IMR-90 (cell line): ENCODE measurements at regions of chr3 and their contacts with region 1.

Region 1: GRCh38 chr3:33331414-33331813 is 54.2 kb downstream of the FBXL2 start:
- DNase-seq: peak; percentile 46
- ATAC-seq: 0 out of 2 replicates have a peak, but pooled peaks have one; percentile 14
- H3K4me3 ChIP-seq: no peak overlapping the region
- H3K27ac ChIP-seq: no peak overlapping the region
- H3K4me1 ChIP-seq: peaks cover 2% of the 10 kb centered on the region; the same call in 1 of the 2 replicates
- H3K27me3 ChIP-seq: no peaks in the 10 kb centered on the region
- CTCF ChIP-seq: no peak
- POLR2A ChIP-seq: no peak
- RAD21 ChIP-seq: no peak

Region 2: DNA sequence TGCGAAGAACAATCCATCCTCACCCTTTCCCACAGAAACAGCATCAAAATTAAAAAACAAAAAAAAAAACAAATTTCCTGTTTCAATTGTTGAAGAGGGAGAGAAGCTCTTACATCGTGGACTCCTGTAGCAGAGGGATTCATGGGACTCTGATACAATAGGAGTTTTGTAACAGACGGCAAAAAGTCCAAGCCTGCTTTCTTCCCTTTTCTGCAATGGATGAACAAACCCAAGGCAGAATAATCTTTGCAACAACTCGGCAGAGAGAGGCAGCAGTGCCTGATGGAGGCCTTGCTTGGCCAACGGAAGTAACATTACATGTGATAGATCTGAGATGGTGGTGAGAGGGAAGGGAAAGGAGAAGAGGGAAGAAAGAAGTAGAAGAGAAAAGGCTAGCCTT is 353.1 kb before region 1 on chr3:
- CTCF ChIA-PET with region 1: no interaction called
- POLR2A ChIA-PET with region 1: no interaction called
- dilution Hi-C with region 1: no loop called
- in situ Hi-C with region 1: no loop called
- intact Hi-C with region 1: no loop called
- DNase-seq: no peak
- ATAC-seq: no peak
- H3K4me3 ChIP-seq: no peak overlapping the region
- H3K27ac ChIP-seq: no peak overlapping the region
- H3K4me1 ChIP-seq: no peaks in the 10 kb centered on the region
- H3K27me3 ChIP-seq: peaks cover 8% of the 10 kb centered on the region
- CTCF ChIP-seq: no peak
- POLR2A ChIP-seq: no peak
- RAD21 ChIP-seq: no peak

Region 3: GRCh38 chr3:33287672-33288282 is 43.6 kb before region 1 on chr3:
- CTCF ChIA-PET with region 1: no interaction called
- POLR2A ChIA-PET with region 1: no interaction called
- dilution Hi-C with region 1: no loop called
- in situ Hi-C with region 1: no loop called
- intact Hi-C with region 1: loop called (anchors 10 kb)
- DNase-seq: no peak
- ATAC-seq: no peak
- H3K4me3 ChIP-seq: no peak overlapping the region
- H3K27ac ChIP-seq: no peak overlapping the region
- H3K4me1 ChIP-seq: no peaks in the 10 kb centered on the region
- H3K27me3 ChIP-seq: no peaks in the 10 kb centered on the region
- CTCF ChIP-seq: no peak
- POLR2A ChIP-seq: no peak
- RAD21 ChIP-seq: no peak